Activated CD8-positive, alpha-beta memory T cell treated with anti-CD3 and anti-CD28 coated beads, Interleukin-2, amount 10 ng/mL, durations not matched to agents 7 days and 5 days (primary cell): ENCODE measurements at regions of chr17 and their contacts with region 1.

Region 1: DNA sequence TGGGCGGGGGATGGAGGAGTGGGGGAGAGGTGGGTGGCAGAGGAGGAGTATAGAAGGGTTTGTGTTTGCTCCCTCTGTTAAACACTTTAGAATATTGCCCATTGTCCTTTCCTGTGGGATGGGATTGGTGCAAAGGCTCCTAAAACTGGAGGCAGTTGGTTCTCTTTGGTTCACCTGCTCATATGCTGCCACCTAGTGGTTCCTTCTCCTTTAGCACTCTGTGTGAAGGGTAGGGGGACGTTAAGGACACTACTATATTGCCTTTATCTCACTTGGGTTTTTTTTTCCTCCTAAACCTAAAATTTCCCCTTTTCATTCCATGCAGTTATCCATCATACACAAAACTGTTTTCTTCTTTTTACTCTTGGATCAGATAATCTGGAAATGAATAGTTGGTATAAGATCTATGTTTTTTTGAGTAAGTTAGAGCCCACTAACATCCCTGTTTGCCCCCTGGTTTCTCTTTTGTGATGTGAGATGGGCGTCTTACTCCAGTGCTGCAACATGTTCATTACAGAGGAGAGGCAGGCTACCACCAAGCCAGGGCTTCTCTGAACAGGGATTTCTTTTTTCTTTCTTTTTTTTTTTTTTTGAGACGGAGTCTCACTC is 23.8 kb downstream of the SNX11 start:
- DNase-seq: peak; percentile 57
- ATAC-seq: peak; percentile 67
- H3K4me3 Mint-ChIP-seq: no peak overlapping the region
- H3K27ac Mint-ChIP-seq: no peak overlapping the region
- H3K4me1 Mint-ChIP-seq: no peaks in the 10 kb centered on the region
- H3K27me3 Mint-ChIP-seq: no peaks in the 10 kb centered on the region

Region 2: DNA sequence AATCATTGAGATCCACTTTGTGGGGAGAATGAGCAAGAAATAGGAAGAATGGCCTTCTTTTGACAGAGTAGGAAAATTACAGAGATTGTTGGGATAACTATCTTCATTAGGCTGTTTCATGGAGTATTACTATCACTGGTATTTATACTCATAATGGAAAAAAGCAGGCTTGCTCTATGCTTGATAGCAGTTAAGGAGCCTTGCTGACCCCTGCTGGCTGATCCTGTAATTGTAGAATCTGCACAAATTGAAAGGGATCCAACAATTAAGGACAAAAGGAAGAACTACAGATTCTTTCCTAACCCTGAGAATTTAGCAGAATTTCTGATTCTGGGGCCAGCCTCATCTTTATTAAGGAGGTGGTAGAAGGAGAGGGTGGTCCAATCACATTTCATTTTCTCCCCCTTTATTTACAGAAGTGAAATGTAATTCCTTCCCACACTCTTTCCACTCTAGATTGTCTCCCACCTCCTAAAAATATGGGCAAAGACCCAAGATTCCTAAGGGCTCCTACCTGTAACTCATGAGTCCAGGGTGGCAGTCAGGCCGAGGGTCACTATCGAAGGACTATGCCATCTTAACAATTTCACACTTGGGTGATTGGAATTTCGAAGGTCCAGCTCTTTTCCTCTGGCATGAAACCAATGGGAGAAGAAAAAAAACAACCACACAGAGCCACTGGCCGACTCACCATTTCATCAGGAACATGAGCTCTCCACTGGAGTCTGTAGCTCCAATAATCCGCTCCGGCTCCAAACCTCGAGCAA is 56.8 kb before region 1 on chr17:
- CTCF ChIA-PET with region 1: interaction called, 113 read pairs
- DNase-seq: peak; percentile 83
- ATAC-seq: peak; percentile 84
- H3K4me3 Mint-ChIP-seq: no peak overlapping the region
- H3K27ac Mint-ChIP-seq: no peak overlapping the region
- H3K4me1 Mint-ChIP-seq: no peaks in the 10 kb centered on the region
- H3K27me3 Mint-ChIP-seq: no peaks in the 10 kb centered on the region

Region 3: DNA sequence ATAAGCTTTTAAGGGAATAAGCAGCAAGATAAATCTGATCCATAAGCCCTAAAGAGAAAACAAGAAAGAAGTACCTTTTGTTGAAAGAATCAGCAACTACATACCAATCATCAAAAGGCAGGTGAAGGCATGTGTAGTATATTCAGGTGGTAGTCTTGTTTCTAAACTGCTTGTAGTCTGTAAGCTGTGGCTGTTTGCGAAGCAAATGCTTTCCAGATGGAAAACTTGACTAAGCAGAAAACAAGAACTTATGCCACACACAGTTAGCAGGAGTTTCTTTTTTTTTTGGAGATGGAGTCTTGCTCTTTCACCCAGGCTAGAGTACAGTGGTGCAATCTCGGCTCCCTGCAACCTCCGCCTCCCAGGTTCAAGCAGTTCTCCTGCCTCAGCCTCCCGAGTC is 35.7 kb before region 1 on chr17:
- CTCF ChIA-PET with region 1: interaction called, 12 read pairs
- DNase-seq: no peak
- ATAC-seq: no peak
- H3K4me3 Mint-ChIP-seq: no peak overlapping the region
- H3K27ac Mint-ChIP-seq: no peak overlapping the region
- H3K4me1 Mint-ChIP-seq: peaks cover 24% of the 10 kb centered on the region
- H3K27me3 Mint-ChIP-seq: no peaks in the 10 kb centered on the region

Region 4: GRCh38 chr17:48107168-48108132 is 23.9 kb before region 1 on chr17 and contains the start of gene SNX11:
- CTCF ChIA-PET with region 1: interaction called, 28 read pairs
- DNase-seq: peak; percentile 96
- ATAC-seq: peak; percentile 95
- H3K4me3 Mint-ChIP-seq: peak within 1 kb of the TSS; percentile 96
- H3K27ac Mint-ChIP-seq: peak within 1 kb of the TSS; percentile 93
- H3K4me1 Mint-ChIP-seq: peaks cover 64% of the 10 kb centered on the region
- H3K27me3 Mint-ChIP-seq: no peaks in the 10 kb centered on the region
- total RNA-seq, gene SNX11: 25.1 to 32.6 TPM

Region 5: DNA sequence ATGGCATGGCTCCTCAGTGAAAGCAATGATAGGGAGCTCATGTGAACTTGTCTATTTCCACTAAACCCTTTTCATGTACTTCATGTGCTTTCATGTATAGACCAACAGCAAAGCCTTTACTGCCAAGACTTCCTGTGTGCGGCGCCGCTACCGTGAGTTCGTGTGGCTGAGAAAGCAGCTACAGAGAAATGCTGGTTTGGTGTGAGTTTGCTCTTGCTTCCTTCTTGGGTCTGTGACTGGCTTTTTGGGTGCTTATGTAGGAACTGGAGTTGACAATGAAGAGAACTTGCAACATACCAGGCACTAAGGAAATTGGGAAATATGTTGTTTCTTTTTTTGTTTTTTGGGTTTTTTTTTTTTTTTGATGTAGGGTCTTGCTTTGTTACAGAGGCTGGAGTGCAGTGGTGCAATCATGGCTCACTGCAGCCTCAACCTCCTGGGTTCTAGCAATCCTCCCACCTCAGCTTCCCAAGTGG is 18.1 kb before region 1 on chr17:
- CTCF ChIA-PET with region 1: interaction called, 28 read pairs
- DNase-seq: peak; percentile 78
- ATAC-seq: peak; percentile 86
- H3K4me3 Mint-ChIP-seq: peak overlapping the region; percentile 49
- H3K27ac Mint-ChIP-seq: peak overlapping the region; percentile 95
- H3K4me1 Mint-ChIP-seq: peaks cover 45% of the 10 kb centered on the region
- H3K27me3 Mint-ChIP-seq: no peaks in the 10 kb centered on the region

Region 6: DNA sequence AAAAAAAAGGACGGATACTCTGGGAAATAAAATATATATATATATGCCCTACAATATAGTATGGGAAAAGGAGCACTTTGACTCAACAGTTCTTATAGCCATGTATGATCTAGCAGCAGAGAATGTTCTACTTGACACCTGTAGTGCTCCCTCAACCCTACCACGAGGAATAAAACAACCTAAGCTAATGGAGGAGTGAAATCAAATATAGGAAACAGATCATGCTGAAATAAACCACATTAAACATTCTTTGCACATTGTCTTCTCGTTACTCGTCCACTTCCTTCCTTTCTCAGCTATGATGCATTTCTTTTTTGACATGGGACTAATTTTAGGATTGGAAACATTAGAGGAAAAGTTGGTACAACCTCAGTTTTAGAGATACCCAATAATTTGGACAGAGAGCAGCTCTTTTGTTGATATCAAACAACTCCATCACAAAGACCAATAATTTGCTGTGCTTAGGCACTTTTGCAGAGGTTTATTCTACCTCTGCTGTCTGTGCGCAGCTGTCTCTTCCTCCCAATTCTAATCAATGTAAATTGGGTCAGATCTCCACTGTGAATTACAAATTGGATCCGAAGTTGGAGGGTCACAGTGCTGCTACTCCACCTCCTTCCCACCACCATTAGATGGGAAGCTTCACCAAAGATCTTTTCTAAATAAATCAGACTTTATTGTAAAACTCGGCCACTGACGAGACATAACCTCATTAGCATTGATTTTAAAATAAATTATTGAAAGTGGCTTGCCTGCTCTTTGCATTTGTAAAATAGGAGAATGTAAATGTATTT is 42.1 kb after region 1 on chr17:
- CTCF ChIA-PET with region 1: no interaction called
- DNase-seq: no peak
- ATAC-seq: no peak
- H3K4me3 Mint-ChIP-seq: no peak overlapping the region
- H3K27ac Mint-ChIP-seq: no peak overlapping the region
- H3K4me1 Mint-ChIP-seq: peaks cover 13% of the 10 kb centered on the region
- H3K27me3 Mint-ChIP-seq: no peaks in the 10 kb centered on the region

Region 7: GRCh38 chr17:48215583-48216139 is 84.3 kb after region 1 on chr17:
- CTCF ChIA-PET with region 1: no interaction called
- DNase-seq: no peak
- ATAC-seq: no peak
- H3K4me3 Mint-ChIP-seq: no peak overlapping the region
- H3K27ac Mint-ChIP-seq: no peak overlapping the region
- H3K4me1 Mint-ChIP-seq: peaks cover 3% of the 10 kb centered on the region
- H3K27me3 Mint-ChIP-seq: no peaks in the 10 kb centered on the region